GM12878 (cell line): ENCODE measurements at regions of chr2 and their contacts with region 1.

Region 1: DNA sequence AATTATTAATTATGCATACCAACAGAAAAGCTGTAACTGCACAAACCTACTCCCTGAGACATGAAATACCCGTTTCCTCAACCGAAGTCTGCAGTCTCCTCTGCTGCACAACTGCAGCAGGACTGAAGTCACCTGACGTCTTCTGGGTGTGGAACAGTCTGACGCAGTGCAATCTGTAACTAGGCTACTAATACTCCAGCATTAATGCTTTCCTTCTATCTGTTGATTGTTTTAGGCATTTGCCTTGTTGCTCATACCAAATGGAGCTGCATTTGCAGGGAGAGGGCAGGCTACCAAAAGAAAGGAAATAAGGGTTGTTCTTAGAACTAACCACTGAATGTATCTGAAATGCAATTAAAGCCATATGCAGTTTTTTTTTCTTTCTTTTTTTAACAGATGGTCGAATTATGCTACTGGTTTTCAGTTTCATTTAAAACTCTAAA is 40.1 kb downstream of the RTN4 start:
- DNase-seq: peak; percentile 60
- ATAC-seq: peak; percentile 93
- H3K4me3 ChIP-seq: peak overlapping the region; percentile 57
- H3K27ac ChIP-seq: peak overlapping the region; percentile 45
- H3K4me1 ChIP-seq: peaks cover 15% of the 10 kb centered on the region; the same call in 1 of the 2 replicates
- H3K27me3 ChIP-seq: no peaks in the 10 kb centered on the region
- CTCF ChIP-seq: no peak
- EP300 ChIP-seq: no peak
- POLR2A ChIP-seq: peak; percentile 53; the same call in 1 of the 2 replicates
- RAD21 ChIP-seq: no peak

Region 2: GRCh38 chr2:54803783-54804751 is 206.1 kb before region 1 on chr2:
- CTCF ChIA-PET with region 1: no interaction called
- POLR2A ChIA-PET with region 1: no interaction called
- RAD21 ChIA-PET with region 1: no interaction called
- SMC1A ChIA-PET with region 1: no interaction called
- in situ Hi-C with region 1: no loop called
- intact Hi-C with region 1: no loop called
- DNase-seq: no peak
- ATAC-seq: no peak
- H3K4me3 ChIP-seq: no peak overlapping the region
- H3K27ac ChIP-seq: no peak overlapping the region
- H3K4me1 ChIP-seq: no peaks in the 10 kb centered on the region
- H3K27me3 ChIP-seq: peaks cover 0 to 3% of the 10 kb centered on the region in 2 experiments; a peak in 1 of 4 replicates
- CTCF ChIP-seq: no peak
- EP300 ChIP-seq: no peak
- POLR2A ChIP-seq: no peak
- RAD21 ChIP-seq: no peak

Region 3: DNA sequence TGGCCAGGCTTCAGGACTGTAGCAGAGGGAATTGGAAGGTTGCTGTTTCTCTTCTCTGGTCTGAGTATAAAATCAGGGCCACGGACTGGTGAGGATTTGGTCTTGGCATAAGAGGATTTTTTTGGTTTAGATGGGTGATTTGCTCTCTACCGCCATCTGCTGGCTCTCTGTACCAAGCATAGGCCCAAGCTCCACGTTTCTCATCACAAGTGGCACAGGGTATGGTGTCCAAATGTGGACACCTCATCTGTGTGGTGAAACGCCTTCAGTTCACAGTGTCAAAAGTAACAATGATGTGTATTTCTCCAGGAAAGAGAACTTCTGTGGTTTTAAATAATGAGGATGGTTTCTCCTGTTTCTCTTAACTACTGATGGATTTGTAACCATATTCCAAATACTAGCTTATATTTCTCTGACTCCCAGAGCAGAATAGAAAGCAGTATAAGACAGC is 171.6 kb before region 1 on chr2:
- CTCF ChIA-PET with region 1: interaction called, 14 read pairs
- POLR2A ChIA-PET with region 1: no interaction called
- RAD21 ChIA-PET with region 1: interaction called, 6 read pairs
- SMC1A ChIA-PET with region 1: interaction called, 14 read pairs
- in situ Hi-C with region 1: no loop called
- intact Hi-C with region 1: no loop called
- DNase-seq: peak; percentile 20
- ATAC-seq: peak; percentile 98
- H3K4me3 ChIP-seq: no peak overlapping the region
- H3K27ac ChIP-seq: no peak overlapping the region
- H3K4me1 ChIP-seq: no peaks in the 10 kb centered on the region
- H3K27me3 ChIP-seq: no peaks in the 10 kb centered on the region
- CTCF ChIP-seq: peak; percentile 82 to 91 (median 91)
- EP300 ChIP-seq: no peak
- POLR2A ChIP-seq: no peak
- RAD21 ChIP-seq: peak; percentile 74

Region 4: GRCh38 chr2:54927085-54927750 is 83.0 kb before region 1 on chr2:
- CTCF ChIA-PET with region 1: no interaction called
- POLR2A ChIA-PET with region 1: no interaction called
- RAD21 ChIA-PET with region 1: no interaction called
- SMC1A ChIA-PET with region 1: no interaction called
- in situ Hi-C with region 1: no loop called
- intact Hi-C with region 1: no loop called
- DNase-seq: no peak
- ATAC-seq: no peak
- H3K4me3 ChIP-seq: no peak overlapping the region
- H3K27ac ChIP-seq: no peak overlapping the region
- H3K4me1 ChIP-seq: peaks cover 3% of the 10 kb centered on the region; the same call in 1 of the 2 replicates
- H3K27me3 ChIP-seq: no peaks in the 10 kb centered on the region
- CTCF ChIP-seq: no peak
- EP300 ChIP-seq: no peak
- POLR2A ChIP-seq: no peak
- RAD21 ChIP-seq: no peak

Region 5: GRCh38 chr2:54977149-54977548 is 33.0 kb before region 1 on chr2:
- CTCF ChIA-PET with region 1: interaction called, 10 read pairs
- POLR2A ChIA-PET with region 1: interaction called, 3 read pairs
- RAD21 ChIA-PET with region 1: interaction called, 24 read pairs
- SMC1A ChIA-PET with region 1: interaction called, 12 read pairs
- in situ Hi-C with region 1: no loop called
- intact Hi-C with region 1: no loop called
- DNase-seq: peak; percentile 77
- ATAC-seq: peak; percentile 93
- H3K4me3 ChIP-seq: peak overlapping the region; percentile 53; the same call in 1 of the 2 replicates
- H3K27ac ChIP-seq: peak overlapping the region; percentile 74
- H3K4me1 ChIP-seq: peaks cover 26% of the 10 kb centered on the region
- H3K27me3 ChIP-seq: no peaks in the 10 kb centered on the region
- CTCF ChIP-seq: no peak
- EP300 ChIP-seq: peak in 1 of 2 experiments; percentile 23; a peak in 1 of 4 replicates
- POLR2A ChIP-seq: no peak
- RAD21 ChIP-seq: no peak; the same call in 1 of the 2 replicates

Region 6: DNA sequence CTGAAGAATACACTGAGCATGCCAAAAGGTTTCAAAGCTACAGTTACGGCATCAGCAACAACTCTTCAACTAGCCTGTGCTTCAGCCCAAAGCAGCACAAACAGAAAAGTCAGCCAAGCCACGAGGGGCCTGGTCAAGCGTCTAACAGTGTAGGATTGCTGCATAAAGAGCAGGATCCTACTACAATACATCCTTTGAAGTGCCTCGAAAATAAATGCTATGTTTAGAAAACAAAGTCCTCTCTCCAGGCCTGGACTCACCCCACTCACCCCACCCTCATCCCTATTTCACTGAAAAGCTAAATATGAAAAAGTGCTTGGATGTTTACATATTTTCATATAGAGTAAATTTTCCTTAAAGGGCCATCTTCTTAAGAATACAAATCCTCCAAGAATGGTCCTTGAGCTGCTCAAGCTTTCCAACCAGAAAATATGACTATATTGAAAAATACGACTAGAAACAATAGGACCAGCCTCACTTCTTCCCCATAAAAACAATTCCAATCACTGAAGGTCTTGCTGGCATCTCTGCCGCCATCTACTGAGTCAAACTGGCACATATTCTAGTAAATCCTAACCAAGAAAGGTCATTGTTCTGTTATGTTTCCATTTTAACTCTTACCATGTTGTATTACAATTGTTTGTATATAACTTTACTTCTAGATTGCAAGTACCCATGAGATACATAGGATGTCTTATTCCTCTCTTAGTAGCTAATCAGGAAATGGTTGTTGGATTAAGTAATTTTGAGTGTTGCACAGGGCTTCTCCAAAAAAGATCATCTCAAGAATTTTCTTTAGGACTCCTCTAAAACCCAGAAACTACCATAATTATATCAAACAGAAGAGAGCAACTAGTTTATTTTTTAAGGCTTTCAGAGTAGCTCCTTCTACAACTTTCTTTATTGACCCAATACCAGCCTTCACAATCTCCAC is 158.3 kb after region 1 on chr2:
- CTCF ChIA-PET with region 1: interaction called, 342 read pairs
- POLR2A ChIA-PET with region 1: interaction called, 4 read pairs
- RAD21 ChIA-PET with region 1: interaction called, 49 read pairs
- SMC1A ChIA-PET with region 1: interaction called, 260 read pairs
- in situ Hi-C with region 1: loop called (anchors 5 kb)
- intact Hi-C with region 1: loop called (anchors 1 kb)
- DNase-seq: no peak
- ATAC-seq: peak; percentile 83
- H3K4me3 ChIP-seq: no peak overlapping the region
- H3K27ac ChIP-seq: no peak overlapping the region
- H3K4me1 ChIP-seq: no peaks in the 10 kb centered on the region
- H3K27me3 ChIP-seq: no peaks in the 10 kb centered on the region
- CTCF ChIP-seq: peak; percentile 73 to 74 (median 73)
- EP300 ChIP-seq: no peak
- POLR2A ChIP-seq: no peak
- RAD21 ChIP-seq: peak; percentile 89

Region 7: DNA sequence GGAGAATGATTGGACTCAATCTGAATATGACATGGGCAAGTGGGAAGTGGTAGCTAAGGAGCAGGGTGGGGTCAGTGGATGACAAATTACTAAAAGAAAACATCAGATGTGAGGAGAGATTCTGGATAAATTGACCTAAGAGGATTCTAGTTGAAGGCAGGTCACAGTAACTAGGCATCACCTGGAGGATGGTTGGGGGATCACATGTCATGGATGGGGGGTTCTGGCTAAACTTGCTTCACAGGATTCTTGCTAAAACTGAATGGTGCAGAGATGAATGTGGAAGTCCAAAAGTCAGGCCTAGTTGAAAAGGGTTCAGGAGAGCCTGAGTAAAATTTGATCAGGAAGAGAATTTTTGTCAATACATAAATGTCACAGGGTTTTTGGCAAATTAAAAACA is 203.7 kb after region 1 on chr2:
- CTCF ChIA-PET with region 1: no interaction called
- POLR2A ChIA-PET with region 1: no interaction called
- RAD21 ChIA-PET with region 1: no interaction called
- SMC1A ChIA-PET with region 1: no interaction called
- in situ Hi-C with region 1: no loop called
- intact Hi-C with region 1: no loop called
- DNase-seq: no peak
- ATAC-seq: no peak
- H3K4me3 ChIP-seq: no peak overlapping the region
- H3K27ac ChIP-seq: no peak overlapping the region
- H3K4me1 ChIP-seq: no peaks in the 10 kb centered on the region
- H3K27me3 ChIP-seq: no peaks in the 10 kb centered on the region
- CTCF ChIP-seq: no peak
- EP300 ChIP-seq: no peak
- POLR2A ChIP-seq: no peak
- RAD21 ChIP-seq: no peak

Region 8: GRCh38 chr2:56034258-56034657 is 1024.1 kb after region 1 on chr2:
- CTCF ChIA-PET with region 1: no interaction called
- POLR2A ChIA-PET with region 1: no interaction called
- RAD21 ChIA-PET with region 1: no interaction called
- SMC1A ChIA-PET with region 1: no interaction called
- in situ Hi-C with region 1: no loop called
- intact Hi-C with region 1: no loop called
- DNase-seq: no peak
- ATAC-seq: no peak
- H3K4me3 ChIP-seq: no peak overlapping the region
- H3K27ac ChIP-seq: no peak overlapping the region
- H3K4me1 ChIP-seq: no peaks in the 10 kb centered on the region
- H3K27me3 ChIP-seq: no peaks in the 10 kb centered on the region; a peak in 1 of 4 replicates
- CTCF ChIP-seq: no peak
- EP300 ChIP-seq: no peak
- POLR2A ChIP-seq: no peak
- RAD21 ChIP-seq: no peak